CD4-positive, alpha-beta T cell (primary cell): ENCODE measurements at regions of chr5 and their contacts with region 1.

Region 1: GRCh38 chr5:64680289-64680688 is 10.0 kb upstream of the SHISAL2B start:
- DNase-seq: no peak
- ATAC-seq: no peak
- H3K4me3 ChIP-seq: no peak overlapping the region
- H3K4me3 Mint-ChIP-seq: no peak overlapping the region
- H3K27ac ChIP-seq: no peak overlapping the region
- H3K27ac Mint-ChIP-seq: no peak overlapping the region
- H3K4me1 ChIP-seq: no peaks in the 10 kb centered on the region
- H3K4me1 Mint-ChIP-seq: no peaks in the 10 kb centered on the region
- H3K27me3 ChIP-seq: peaks cover 0 to 8% of the 10 kb centered on the region in 2 experiments
- H3K27me3 Mint-ChIP-seq: peaks cover 42% of the 10 kb centered on the region
- CTCF ChIP-seq: no peak

Region 2: DNA sequence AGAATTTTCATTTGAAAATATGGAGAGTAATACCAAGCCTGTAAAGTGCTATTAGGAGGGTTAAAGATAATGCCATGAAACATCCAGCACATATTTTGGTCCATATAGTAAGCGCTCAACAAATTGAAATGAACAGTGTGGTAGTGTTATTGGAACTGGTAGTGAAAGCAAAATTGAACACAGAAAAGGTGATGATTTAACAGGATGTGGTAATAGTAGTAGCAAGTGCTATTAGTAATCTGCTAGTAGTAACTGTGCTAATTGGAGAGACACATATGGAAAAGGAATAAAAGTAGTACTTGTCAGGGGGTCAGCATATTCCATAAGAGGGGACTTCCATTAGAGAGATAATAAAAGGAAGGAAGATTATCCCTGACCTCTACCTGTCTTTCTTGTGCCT is 905.4 kb before region 1 on chr5:
- CTCF ChIA-PET with region 1: no interaction called
- POLR2A ChIA-PET with region 1: no interaction called
- intact Hi-C with region 1: no loop called
- DNase-seq: no peak
- ATAC-seq: no peak
- H3K4me3 ChIP-seq: no peak overlapping the region
- H3K4me3 Mint-ChIP-seq: no peak overlapping the region
- H3K27ac ChIP-seq: no peak overlapping the region
- H3K27ac Mint-ChIP-seq: no peak overlapping the region
- H3K4me1 ChIP-seq: no peaks in the 10 kb centered on the region
- H3K4me1 Mint-ChIP-seq: no peaks in the 10 kb centered on the region
- H3K27me3 ChIP-seq: no peaks in the 10 kb centered on the region
- H3K27me3 Mint-ChIP-seq: no peaks in the 10 kb centered on the region
- CTCF ChIP-seq: no peak

Region 3: DNA sequence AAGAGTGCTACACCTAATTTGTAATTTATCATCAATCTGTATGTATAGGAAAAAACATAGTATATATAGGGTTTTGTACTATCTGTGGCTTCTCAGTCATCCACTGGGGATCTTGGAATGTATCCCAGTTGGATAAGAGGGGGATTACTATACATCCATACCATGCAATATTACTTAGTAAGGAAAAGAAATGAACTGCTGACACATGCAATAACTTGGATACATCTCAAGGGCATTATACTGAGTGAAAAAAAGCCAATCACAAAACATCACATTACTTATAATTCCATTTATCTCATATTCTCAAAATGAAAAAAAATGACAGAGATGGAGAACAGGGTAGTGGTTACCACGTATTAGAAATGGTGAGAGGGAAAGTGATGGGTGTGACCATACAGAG is 282.7 kb before region 1 on chr5:
- CTCF ChIA-PET with region 1: no interaction called
- POLR2A ChIA-PET with region 1: no interaction called
- intact Hi-C with region 1: loop called in 1 of 2 experiments (anchors 10 kb)
- DNase-seq: no peak
- ATAC-seq: no peak
- H3K4me3 ChIP-seq: no peak overlapping the region
- H3K4me3 Mint-ChIP-seq: no peak overlapping the region
- H3K27ac ChIP-seq: no peak overlapping the region
- H3K27ac Mint-ChIP-seq: no peak overlapping the region
- H3K4me1 ChIP-seq: no peaks in the 10 kb centered on the region
- H3K4me1 Mint-ChIP-seq: no peaks in the 10 kb centered on the region
- H3K27me3 ChIP-seq: no peaks in the 10 kb centered on the region
- H3K27me3 Mint-ChIP-seq: no peaks in the 10 kb centered on the region
- CTCF ChIP-seq: no peak

Region 4: DNA sequence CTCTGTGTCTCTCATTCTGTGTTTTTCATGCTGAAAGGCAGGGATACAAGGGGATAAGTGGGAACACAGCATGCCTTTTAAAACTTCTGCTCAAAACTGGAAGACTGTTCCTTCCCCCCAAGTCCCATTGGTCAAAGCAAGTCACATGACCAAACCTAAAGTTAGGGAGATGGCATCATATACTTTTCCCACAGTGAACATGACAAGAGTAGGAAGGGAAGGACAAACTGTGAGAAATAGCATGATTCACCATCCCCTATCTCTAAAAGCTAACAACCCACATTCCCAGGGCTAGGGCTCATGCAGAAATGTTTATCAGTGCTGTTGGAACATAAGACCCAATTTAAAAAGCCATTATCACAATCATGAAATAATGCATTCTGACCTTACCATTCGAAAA is 14.2 kb before region 1 on chr5:
- CTCF ChIA-PET with region 1: no interaction called
- POLR2A ChIA-PET with region 1: no interaction called
- intact Hi-C with region 1: no loop called
- DNase-seq: no peak
- ATAC-seq: no peak
- H3K4me3 ChIP-seq: no peak overlapping the region
- H3K4me3 Mint-ChIP-seq: no peak overlapping the region
- H3K27ac ChIP-seq: no peak overlapping the region
- H3K27ac Mint-ChIP-seq: no peak overlapping the region
- H3K4me1 ChIP-seq: no peaks in the 10 kb centered on the region
- H3K4me1 Mint-ChIP-seq: no peaks in the 10 kb centered on the region
- H3K27me3 ChIP-seq: peaks cover 0 to 14% of the 10 kb centered on the region in 2 experiments
- H3K27me3 Mint-ChIP-seq: peaks cover 18% of the 10 kb centered on the region
- CTCF ChIP-seq: no peak